Gastrocnemius medialis (tissue), 4 donors: ENCODE measurements at regions of chr1 and their contacts with region 1.

Region 1: GRCh38 chr1:153749408-153750005 is 21.7 kb downstream of the INTS3 start:
- DNase-seq: peak; percentile 88 to 93
- ATAC-seq: peak; percentile 78 to 88
- H3K4me3 ChIP-seq: no peak overlapping the region
- H3K27ac ChIP-seq: peak overlapping the region; percentile 68 to 95 (median 83)
- H3K4me1 ChIP-seq: peaks cover 36 to 51% of the 10 kb centered on the region in 2 donors
- H3K27me3 ChIP-seq: no peaks in the 10 kb centered on the region
- CTCF ChIP-seq: peak; percentile 88 to 95 (median 91)
- POLR2A ChIP-seq: peak in 1 of 2 donors; percentile 38

Region 2: DNA sequence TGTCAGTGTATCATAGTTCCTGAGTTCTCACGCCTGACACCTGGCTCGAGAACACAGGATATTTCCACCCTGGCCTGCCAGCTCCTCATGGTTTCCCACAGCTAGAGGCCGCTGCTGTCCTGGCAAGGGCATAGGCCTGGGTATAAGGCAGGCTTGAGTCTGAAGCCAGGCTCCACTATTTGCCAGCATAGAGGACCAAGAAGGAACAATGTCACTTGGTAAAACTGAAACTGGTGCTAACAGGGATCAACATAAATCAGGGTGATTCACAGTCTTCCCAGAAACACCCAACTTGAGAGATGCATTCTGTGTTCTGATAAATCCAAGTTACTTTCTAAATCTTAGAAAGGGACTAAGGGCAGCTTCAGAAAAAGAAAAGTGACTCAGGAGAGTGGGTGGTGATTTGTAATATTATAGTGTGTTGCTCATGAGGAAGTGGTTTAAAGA is 176.9 kb before region 1 on chr1:
- in situ Hi-C with region 1: loop called in 1 of 4 experiments (anchors 25 kb)
- intact Hi-C with region 1: loop called (anchors 1 kb)
- DNase-seq: peak; percentile 80 to 88
- ATAC-seq: peak; percentile 83 to 86
- H3K4me3 ChIP-seq: no peak overlapping the region
- H3K27ac ChIP-seq: peak overlapping the region; percentile 59 to 77 (median 67)
- H3K4me1 ChIP-seq: peaks cover 14 to 27% of the 10 kb centered on the region in 2 donors
- H3K27me3 ChIP-seq: no peaks in the 10 kb centered on the region
- CTCF ChIP-seq: peak; percentile 78 to 90 (median 84)
- POLR2A ChIP-seq: no peak

Region 3: GRCh38 chr1:153677718-153678505 is 71.6 kb before region 1 on chr1:
- in situ Hi-C with region 1: loop called (anchors 5 to 10 kb)
- intact Hi-C with region 1: loop called (anchors 1 kb)
- DNase-seq: peak in 1 of 2 donors; percentile 22
- ATAC-seq: peak; percentile 58 to 73
- H3K4me3 ChIP-seq: peak overlapping the region; percentile 45 to 70 (median 59)
- H3K27ac ChIP-seq: peak overlapping the region; percentile 16 to 57 (median 52)
- H3K4me1 ChIP-seq: peaks cover 9 to 16% of the 10 kb centered on the region in 2 donors
- H3K27me3 ChIP-seq: peaks cover 20 to 27% (median 22%) of the 10 kb centered on the region in 3 donors
- CTCF ChIP-seq: peak; percentile 82 to 93 (median 84)
- POLR2A ChIP-seq: no peak

Region 4: DNA sequence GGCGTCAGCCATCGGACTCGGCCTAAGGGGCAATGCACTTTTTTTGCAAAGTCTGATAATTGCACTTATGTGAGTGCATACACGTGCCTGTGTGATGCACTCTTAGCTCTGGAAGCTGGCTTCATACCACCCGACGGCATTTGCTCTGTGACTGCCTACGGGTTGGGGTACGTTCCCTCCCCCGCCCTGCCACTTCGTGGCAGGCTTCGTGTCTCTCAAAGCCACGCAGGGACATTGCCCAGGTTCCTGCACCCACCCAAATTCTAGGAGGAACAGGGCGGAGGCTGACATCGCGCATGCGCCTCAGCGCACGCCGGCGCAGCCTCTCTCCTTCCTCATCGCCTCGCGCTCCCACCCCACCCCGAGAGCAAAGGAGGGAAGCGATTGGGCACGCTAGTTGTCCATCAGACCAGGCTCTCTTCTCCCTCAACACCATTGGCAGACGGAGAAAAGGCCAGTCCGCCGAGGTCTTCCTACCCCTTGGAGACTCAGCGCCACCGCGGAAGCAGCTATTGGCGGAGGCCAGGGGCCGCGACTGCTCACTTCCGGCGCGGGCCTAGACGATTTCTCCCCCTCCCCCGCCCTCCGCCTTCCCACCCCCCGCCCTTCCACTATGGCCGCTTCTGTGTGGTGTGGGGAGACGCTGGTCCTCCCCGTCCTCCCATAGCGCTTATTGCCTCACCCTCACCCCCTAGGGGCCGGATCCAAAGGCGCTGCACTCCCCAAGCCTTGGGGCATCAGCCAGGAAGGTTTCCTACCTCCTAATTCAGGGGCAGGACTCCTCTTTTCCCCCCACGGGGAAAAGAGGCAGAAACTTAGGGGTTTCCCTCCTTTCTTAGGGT is 21.8 kb before region 1 on chr1 and contains the start of gene INTS3:
- in situ Hi-C with region 1: no loop called
- intact Hi-C with region 1: loop called (anchors 1 kb)
- DNase-seq: peak; percentile 100
- ATAC-seq: peak; percentile 99 to 100
- H3K4me3 ChIP-seq: peak within 1 kb of the TSS; percentile 77 to 96 (median 88)
- H3K27ac ChIP-seq: peak within 1 kb of the TSS; percentile 95 to 100 (median 98)
- H3K4me1 ChIP-seq: peaks cover 20 to 24% of the 10 kb centered on the region in 2 donors
- H3K27me3 ChIP-seq: no peaks in the 10 kb centered on the region
- CTCF ChIP-seq: peak in 2 of 5 experiments; percentile 12 to 32
- POLR2A ChIP-seq: peak; percentile 42 to 52
- total RNA-seq, gene INTS3: 16.1 to 28.0 (median 19.9) TPM

Region 5: DNA sequence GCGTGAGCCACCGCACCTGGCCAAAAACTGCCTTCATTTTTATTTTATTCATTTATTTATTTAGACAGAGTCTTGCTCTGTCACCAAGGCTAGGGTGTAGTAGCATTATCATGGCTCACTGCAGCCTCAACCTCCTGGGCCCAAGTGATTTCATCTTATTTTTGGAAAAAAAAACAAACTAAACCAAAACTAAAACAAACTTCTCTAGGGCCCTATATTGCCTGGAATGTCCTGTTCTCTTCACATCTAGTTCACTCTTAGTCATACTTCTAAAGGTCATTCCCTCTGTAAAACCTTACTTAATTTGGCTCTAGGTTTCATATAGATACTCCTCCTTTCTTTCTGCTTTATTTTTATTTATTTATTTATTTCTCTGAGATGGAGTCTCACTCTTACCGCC is 256.6 kb after region 1 on chr1:
- in situ Hi-C with region 1: no loop called
- intact Hi-C with region 1: no loop called
- DNase-seq: no peak
- ATAC-seq: no peak
- H3K4me3 ChIP-seq: no peak overlapping the region
- H3K27ac ChIP-seq: no peak overlapping the region
- H3K4me1 ChIP-seq: no peaks in the 10 kb centered on the region
- H3K27me3 ChIP-seq: no peaks in the 10 kb centered on the region
- CTCF ChIP-seq: no peak
- POLR2A ChIP-seq: no peak